Activated B cell treated with CpG ODN at 0.5 μM for 24 hours (primary cell): ENCODE measurements at regions of chr2 and their contacts with region 1.

Region 1: DNA sequence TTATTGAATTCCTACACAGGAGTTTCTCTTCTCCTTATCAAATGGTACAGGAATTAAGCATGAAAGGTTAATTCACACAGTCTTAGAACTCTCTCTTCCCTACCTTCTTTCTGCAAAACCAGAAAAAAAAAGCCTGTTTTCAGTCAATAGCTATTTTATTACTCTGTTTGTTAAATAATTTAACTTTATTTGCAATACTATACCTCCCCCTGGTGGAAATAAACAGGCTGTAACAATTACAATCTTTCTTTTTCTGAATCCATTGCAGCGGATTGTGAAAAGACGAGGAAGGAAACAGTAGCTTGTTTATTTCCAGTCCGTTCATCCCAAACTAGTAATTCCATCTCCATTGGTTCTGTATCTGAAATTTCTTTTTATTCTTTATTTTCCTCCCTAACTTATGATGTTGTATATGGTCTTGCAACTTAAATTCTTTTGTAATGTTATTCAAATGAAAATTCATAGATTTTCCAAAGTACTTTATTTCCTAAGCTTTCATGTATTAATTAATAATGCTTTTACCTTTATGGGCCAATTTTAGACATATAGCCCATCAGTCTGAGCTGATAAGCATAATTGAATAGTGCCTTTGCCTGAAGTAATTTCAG is 165.2 kb downstream of the SH3BP4 start:
- DNase-seq: no peak
- ATAC-seq: no peak
- H3K4me3 Mint-ChIP-seq: no peak overlapping the region
- H3K27ac Mint-ChIP-seq: no peak overlapping the region
- H3K4me1 Mint-ChIP-seq: no peaks in the 10 kb centered on the region
- H3K27me3 Mint-ChIP-seq: peaks cover 13% of the 10 kb centered on the region
- CTCF ChIP-seq: no peak

Region 2: GRCh38 chr2:233976690-233977294 is 1140.2 kb before region 1 on chr2:
- CTCF ChIA-PET with region 1: interaction called, 3 read pairs
- POLR2A ChIA-PET with region 1: no interaction called
- intact Hi-C with region 1: loop called (anchors 2 kb)
- DNase-seq: no peak
- ATAC-seq: peak; percentile 45
- H3K4me3 Mint-ChIP-seq: no peak overlapping the region
- H3K27ac Mint-ChIP-seq: no peak overlapping the region
- H3K4me1 Mint-ChIP-seq: no peaks in the 10 kb centered on the region
- H3K27me3 Mint-ChIP-seq: peaks cover 34% of the 10 kb centered on the region
- CTCF ChIP-seq: no peak

Region 3: GRCh38 chr2:235070063-235070706 is 46.8 kb before region 1 on chr2:
- CTCF ChIA-PET with region 1: no interaction called
- POLR2A ChIA-PET with region 1: no interaction called
- intact Hi-C with region 1: no loop called
- DNase-seq: no peak
- ATAC-seq: no peak
- H3K4me3 Mint-ChIP-seq: no peak overlapping the region
- H3K27ac Mint-ChIP-seq: no peak overlapping the region
- H3K4me1 Mint-ChIP-seq: no peaks in the 10 kb centered on the region
- H3K27me3 Mint-ChIP-seq: peaks cover 5% of the 10 kb centered on the region
- CTCF ChIP-seq: no peak

Region 4: GRCh38 chr2:235144291-235144690 is 27.3 kb after region 1 on chr2:
- CTCF ChIA-PET with region 1: no interaction called
- POLR2A ChIA-PET with region 1: no interaction called
- intact Hi-C with region 1: no loop called
- DNase-seq: no peak
- ATAC-seq: no peak
- H3K4me3 Mint-ChIP-seq: no peak overlapping the region
- H3K27ac Mint-ChIP-seq: no peak overlapping the region
- H3K4me1 Mint-ChIP-seq: no peaks in the 10 kb centered on the region
- H3K27me3 Mint-ChIP-seq: peaks cover 3% of the 10 kb centered on the region
- CTCF ChIP-seq: no peak